CD4-positive, alpha-beta T cell (primary cell): ENCODE measurements at regions of chr16 and their contacts with region 1.

Region 1: GRCh38 chr16:3242709-3243108 is 7.8 kb upstream of the ZNF200 start:
- DNase-seq: peak in 2 of 14 experiments; percentile 23 to 42
- ATAC-seq: no peak
- H3K4me3 ChIP-seq: no peak overlapping the region
- H3K4me3 Mint-ChIP-seq: no peak overlapping the region
- H3K27ac ChIP-seq: no peak overlapping the region
- H3K27ac Mint-ChIP-seq: no peak overlapping the region
- H3K4me1 ChIP-seq: peaks cover 7% of the 10 kb centered on the region
- H3K4me1 Mint-ChIP-seq: no peaks in the 10 kb centered on the region
- H3K27me3 ChIP-seq: no peaks in the 10 kb centered on the region
- H3K27me3 Mint-ChIP-seq: peaks cover 13% of the 10 kb centered on the region
- CTCF ChIP-seq: no peak

Region 2: DNA sequence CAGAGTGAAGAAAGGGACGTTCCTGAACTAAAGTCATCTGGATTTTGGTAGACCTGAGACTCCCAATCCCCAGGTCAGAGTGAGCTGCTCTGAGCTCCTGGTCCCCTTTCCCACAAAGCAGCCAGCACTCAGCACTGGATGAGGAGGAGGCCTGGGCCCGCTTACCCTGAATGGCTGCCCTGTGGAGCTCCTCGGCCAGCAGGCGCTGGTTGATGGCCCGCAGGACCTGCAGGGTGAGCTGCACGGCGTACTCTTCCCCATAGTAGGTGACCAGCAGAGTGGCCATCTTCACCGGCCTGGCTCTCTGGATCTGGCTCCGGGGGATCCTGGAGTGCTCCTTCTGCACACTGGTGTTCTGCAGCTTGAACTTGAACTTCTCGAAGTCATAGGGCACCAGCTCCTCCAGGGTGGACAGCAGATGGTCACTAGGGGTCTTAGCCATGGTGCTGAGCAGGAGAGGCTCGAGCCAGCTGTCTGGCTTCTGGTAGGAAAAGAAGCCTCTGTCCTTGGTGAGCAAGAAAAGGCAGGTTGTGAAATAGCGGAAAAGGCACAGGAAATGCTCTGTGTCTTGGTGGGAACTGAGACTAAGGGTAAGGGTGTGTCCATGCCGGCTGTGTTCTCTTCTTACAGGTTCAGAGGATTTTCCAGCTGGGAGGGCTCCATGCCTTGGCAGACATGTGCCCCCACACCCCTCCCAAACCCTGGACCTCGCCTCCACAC is 13.6 kb after region 1 on chr16 and contains the start of gene MEFV:
- CTCF ChIA-PET with region 1: no interaction called
- POLR2A ChIA-PET with region 1: no interaction called
- intact Hi-C with region 1: loop called in 1 of 2 experiments (anchors 2 kb)
- DNase-seq: peak in 2 of 14 experiments; percentile 53 to 59
- ATAC-seq: no peak
- H3K4me3 ChIP-seq: peak within 1 kb of the TSS; percentile 39
- H3K4me3 Mint-ChIP-seq: no peak within 1 kb of the TSS
- H3K27ac ChIP-seq: no peak within 1 kb of the TSS
- H3K27ac Mint-ChIP-seq: no peak within 1 kb of the TSS
- H3K4me1 ChIP-seq: peaks cover 5% of the 10 kb centered on the region
- H3K4me1 Mint-ChIP-seq: no peaks in the 10 kb centered on the region
- H3K27me3 ChIP-seq: peaks cover 0 to 2% of the 10 kb centered on the region in 2 experiments
- H3K27me3 Mint-ChIP-seq: no peaks in the 10 kb centered on the region
- CTCF ChIP-seq: no peak
- total RNA-seq, gene MEFV: 0.60 to 0.73 TPM

Region 3: DNA sequence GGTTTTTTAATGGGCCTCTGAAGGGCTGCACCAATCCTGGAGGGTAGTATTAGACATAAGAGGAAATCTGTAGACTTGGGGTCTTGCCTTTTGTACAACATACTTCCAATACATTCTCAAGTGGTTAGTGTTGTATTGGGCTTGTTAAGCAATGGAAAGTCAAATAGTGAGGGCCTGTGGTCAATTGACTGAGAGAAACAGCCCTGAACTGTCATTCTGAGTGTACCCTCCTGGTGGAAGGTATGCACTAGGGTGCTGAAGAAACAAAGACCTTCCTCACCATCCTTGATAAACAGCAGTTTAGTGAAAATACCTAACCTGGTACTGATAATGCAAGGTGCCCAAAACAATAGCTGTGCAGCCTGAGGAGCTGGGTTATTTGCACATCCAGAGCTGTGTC is 135.2 kb after region 1 on chr16:
- CTCF ChIA-PET with region 1: no interaction called
- POLR2A ChIA-PET with region 1: no interaction called
- intact Hi-C with region 1: no loop called
- DNase-seq: no peak
- ATAC-seq: no peak
- H3K4me3 ChIP-seq: no peak overlapping the region
- H3K4me3 Mint-ChIP-seq: no peak overlapping the region
- H3K27ac ChIP-seq: no peak overlapping the region
- H3K27ac Mint-ChIP-seq: no peak overlapping the region
- H3K4me1 ChIP-seq: no peaks in the 10 kb centered on the region
- H3K4me1 Mint-ChIP-seq: no peaks in the 10 kb centered on the region
- H3K27me3 ChIP-seq: no peaks in the 10 kb centered on the region
- H3K27me3 Mint-ChIP-seq: no peaks in the 10 kb centered on the region
- CTCF ChIP-seq: no peak